CD4-positive, alpha-beta T cell (primary cell): ENCODE measurements at regions of chr13 and their contacts with region 1.

Region 1: DNA sequence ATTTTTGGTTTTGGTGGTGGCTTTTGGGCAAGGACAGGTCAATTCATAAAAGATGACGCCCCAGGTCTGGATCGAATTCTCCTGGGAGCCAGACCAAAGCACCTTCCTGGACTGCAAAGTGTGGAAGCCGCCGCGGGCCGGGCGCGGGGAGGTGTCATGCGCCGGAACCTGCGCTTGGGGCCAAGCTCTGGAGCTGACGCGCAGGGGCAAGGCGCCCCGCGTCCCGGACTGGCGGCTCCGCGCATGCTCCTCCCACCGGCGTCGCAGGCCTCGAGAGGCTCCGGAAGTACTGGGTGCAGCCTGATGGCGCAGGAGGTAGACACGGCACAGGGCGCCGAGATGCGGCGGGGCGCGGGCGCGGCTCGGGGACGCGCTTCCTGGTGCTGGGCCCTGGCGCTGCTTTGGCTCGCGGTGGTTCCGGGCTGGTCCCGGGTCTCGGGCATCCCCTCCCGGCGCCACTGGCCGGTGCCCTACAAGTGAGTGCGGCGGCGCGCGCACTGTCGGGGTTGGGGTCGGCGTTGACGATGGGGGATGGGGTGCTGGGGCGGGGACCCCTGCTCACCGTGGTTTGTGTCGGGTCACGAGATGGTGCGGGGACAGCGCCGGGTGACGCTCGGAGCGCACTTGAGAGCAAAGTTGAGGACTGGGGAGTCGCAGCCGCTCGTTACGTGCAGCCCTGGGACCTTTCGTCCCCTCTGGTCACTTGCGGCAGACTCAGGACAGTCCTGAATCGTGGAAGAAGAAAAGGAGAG is at the start of gene CLN5:
- DNase-seq: peak; percentile 89 to 99 (median 95)
- ATAC-seq: peak; percentile 85
- H3K4me3 ChIP-seq: peak within 1 kb of the TSS; percentile 72
- H3K4me3 Mint-ChIP-seq: peak within 1 kb of the TSS; percentile 97
- H3K27ac ChIP-seq: peak within 1 kb of the TSS; percentile 89 to 95
- H3K27ac Mint-ChIP-seq: peak within 1 kb of the TSS; percentile 99
- H3K4me1 ChIP-seq: peaks cover 30% of the 10 kb centered on the region
- H3K4me1 Mint-ChIP-seq: peaks cover 60% of the 10 kb centered on the region
- H3K27me3 ChIP-seq: no peaks in the 10 kb centered on the region
- H3K27me3 Mint-ChIP-seq: no peaks in the 10 kb centered on the region
- CTCF ChIP-seq: no peak
- total RNA-seq, gene CLN5: 37.4 to 42.9 TPM

Region 2: DNA sequence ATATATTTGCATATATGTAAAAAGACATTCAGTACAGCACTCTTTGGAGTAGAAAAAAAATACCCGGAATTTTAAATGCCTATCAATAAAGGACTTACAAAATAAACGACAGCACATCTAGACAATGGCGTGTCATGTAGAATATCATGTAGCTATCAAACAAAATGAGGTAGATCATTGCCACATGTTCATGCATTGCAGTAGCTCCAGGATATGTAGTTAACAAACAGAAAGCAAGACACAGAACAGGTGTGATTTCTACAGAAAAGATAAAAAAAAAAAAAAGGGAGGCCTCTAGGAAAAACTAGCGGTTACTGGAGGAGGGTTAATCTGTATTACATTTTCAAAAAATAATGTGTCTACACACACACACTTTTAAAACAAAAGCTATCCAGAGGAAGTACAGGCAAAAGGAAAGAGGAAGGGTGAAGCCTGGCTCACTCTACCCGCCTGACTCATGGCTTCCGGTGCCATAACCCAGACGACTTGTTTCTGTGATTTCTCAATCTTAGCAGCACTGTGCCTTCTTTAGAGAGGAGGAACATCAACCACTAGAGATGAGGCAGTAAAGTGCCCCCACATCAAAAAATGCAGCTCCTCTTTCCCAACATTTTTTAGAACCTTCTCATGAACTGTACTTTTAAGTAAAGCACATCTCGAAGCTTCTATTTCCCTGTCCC is 112.6 kb before region 1 on chr13:
- CTCF ChIA-PET with region 1: interaction called, 3 read pairs
- POLR2A ChIA-PET with region 1: interaction called, 19 read pairs
- intact Hi-C with region 1: no loop called
- DNase-seq: peak; percentile 21 to 81 (median 56)
- ATAC-seq: peak; percentile 99
- H3K4me3 ChIP-seq: peak overlapping the region; percentile 4
- H3K4me3 Mint-ChIP-seq: peak overlapping the region; percentile 76
- H3K27ac ChIP-seq: peak overlapping the region in 1 of 2 donors; percentile 1
- H3K27ac Mint-ChIP-seq: peak overlapping the region; percentile 90
- H3K4me1 ChIP-seq: peaks cover 12% of the 10 kb centered on the region
- H3K4me1 Mint-ChIP-seq: peaks cover 55% of the 10 kb centered on the region
- H3K27me3 ChIP-seq: no peaks in the 10 kb centered on the region
- H3K27me3 Mint-ChIP-seq: no peaks in the 10 kb centered on the region
- CTCF ChIP-seq: no peak

Region 3: DNA sequence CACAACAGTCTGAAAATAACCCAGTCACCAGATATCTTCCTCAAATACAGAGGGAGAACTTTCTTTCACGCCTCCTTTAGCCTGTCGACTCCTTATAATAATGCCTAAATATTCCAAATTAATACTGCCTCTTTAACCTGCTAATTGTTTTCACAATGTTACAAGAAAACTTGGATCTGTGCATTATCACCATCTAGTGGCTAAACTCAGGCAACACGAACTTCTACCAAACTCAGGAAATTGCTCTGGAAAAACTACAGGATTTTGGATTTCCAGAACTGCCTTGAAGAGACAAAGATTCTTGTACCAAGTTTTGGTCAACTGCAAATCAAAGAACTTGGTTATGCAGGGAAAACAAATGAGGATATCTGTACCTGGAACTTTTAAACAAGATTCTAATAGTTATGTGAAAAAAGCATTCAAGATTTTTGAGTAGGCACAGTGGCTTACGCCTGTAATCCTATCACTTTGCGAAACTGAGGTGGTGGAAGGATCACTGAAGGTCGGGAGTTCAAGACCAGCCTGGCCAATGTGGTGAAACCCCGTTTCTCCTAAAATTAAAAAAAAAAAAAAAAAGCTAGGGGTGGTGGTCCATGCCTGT is 10.7 kb after region 1 on chr13:
- CTCF ChIA-PET with region 1: interaction called, 5 read pairs
- POLR2A ChIA-PET with region 1: interaction called, 55 read pairs
- intact Hi-C with region 1: no loop called
- DNase-seq: peak in 3 of 14 experiments; percentile 14 to 42 (median 39)
- ATAC-seq: no peak
- H3K4me3 ChIP-seq: no peak overlapping the region
- H3K4me3 Mint-ChIP-seq: no peak overlapping the region
- H3K27ac ChIP-seq: no peak overlapping the region
- H3K27ac Mint-ChIP-seq: peak overlapping the region; percentile 51
- H3K4me1 ChIP-seq: peaks cover 7% of the 10 kb centered on the region
- H3K4me1 Mint-ChIP-seq: peaks cover 73% of the 10 kb centered on the region
- H3K27me3 ChIP-seq: no peaks in the 10 kb centered on the region
- H3K27me3 Mint-ChIP-seq: no peaks in the 10 kb centered on the region
- CTCF ChIP-seq: peak; percentile 61

Region 4: GRCh38 chr13:78121459-78122348 is 1129.7 kb after region 1 on chr13:
- CTCF ChIA-PET with region 1: no interaction called
- POLR2A ChIA-PET with region 1: no interaction called
- intact Hi-C with region 1: no loop called
- DNase-seq: peak in 8 of 14 experiments; percentile 3 to 72 (median 24)
- ATAC-seq: no peak
- H3K4me3 ChIP-seq: no peak overlapping the region
- H3K4me3 Mint-ChIP-seq: no peak overlapping the region
- H3K27ac ChIP-seq: no peak overlapping the region
- H3K27ac Mint-ChIP-seq: no peak overlapping the region
- H3K4me1 ChIP-seq: no peaks in the 10 kb centered on the region
- H3K4me1 Mint-ChIP-seq: no peaks in the 10 kb centered on the region
- H3K27me3 ChIP-seq: peaks cover 0 to 12% of the 10 kb centered on the region in 2 experiments
- H3K27me3 Mint-ChIP-seq: peaks cover 22% of the 10 kb centered on the region
- CTCF ChIP-seq: peak; percentile 90